ENCODE measurements at regions of chr7 and their contacts with region 1.

Region 1: DNA sequence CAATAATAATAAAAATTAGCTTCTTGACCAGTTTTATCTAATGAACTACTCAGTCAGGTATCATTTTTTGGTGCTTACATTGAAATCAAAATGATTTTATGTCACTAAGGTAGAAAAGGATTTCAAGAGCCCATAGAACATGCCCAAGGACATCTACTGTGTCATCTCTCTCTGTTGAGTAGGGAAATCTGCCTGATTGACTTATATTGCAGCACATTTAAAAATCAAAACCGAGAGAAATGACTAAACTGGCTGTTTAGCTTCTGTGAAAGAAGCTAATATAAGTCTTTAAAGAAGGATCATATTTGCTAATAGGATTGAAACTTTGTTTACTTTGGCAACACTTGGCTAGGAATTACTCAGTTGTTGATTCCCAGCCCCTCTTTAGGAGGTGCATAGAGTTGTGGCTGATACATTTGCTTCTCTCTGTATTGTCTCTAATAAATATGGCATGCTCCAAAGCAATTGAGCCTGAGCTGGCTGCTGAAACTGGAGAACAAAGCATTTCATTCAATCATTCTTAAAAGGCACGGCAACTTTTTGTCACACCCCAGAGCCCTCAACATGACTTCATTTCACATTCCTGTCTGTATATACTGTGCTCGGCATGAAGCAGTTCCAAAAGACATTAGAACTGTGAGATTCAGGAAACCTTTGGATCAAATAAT is 1096.9 kb upstream of the POT1 start:
- DNase-seq: no peak
- ATAC-seq: no peak
- H3K4me3 Mint-ChIP-seq: no peak overlapping the region
- H3K27ac Mint-ChIP-seq: no peak overlapping the region
- H3K4me1 Mint-ChIP-seq: no peaks in the 10 kb centered on the region
- H3K27me3 Mint-ChIP-seq: no peaks in the 10 kb centered on the region

Region 2: GRCh38 chr7:126065766-126066165 is 39.2 kb after region 1 on chr7:
- CTCF ChIA-PET with region 1: no interaction called
- POLR2A ChIA-PET with region 1: no interaction called
- intact Hi-C with region 1: loop called in 1 of 2 experiments (anchors 5 kb)
- DNase-seq: no peak
- ATAC-seq: no peak
- H3K4me3 Mint-ChIP-seq: no peak overlapping the region
- H3K27ac Mint-ChIP-seq: no peak overlapping the region
- H3K4me1 Mint-ChIP-seq: no peaks in the 10 kb centered on the region
- H3K27me3 Mint-ChIP-seq: no peaks in the 10 kb centered on the region

Region 3: DNA sequence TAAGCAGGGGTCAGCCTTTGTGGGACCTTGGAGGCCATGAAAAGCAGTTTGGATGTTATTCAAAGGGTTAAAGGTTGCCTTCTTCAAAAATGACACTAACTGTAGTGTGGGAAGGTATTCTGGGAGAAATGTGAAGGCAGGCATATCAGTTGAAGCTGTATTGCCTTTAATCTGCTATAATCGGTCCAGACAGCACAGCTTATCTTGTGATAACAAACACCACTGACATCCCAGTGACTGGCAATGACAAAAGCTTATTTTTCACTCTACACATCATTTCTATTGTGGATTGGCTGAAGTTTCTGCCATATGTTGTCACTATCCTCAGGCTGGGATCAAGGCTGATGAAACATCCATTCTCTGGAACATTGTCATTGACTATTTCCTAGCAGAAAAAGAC is 77.0 kb after region 1 on chr7:
- CTCF ChIA-PET with region 1: no interaction called
- POLR2A ChIA-PET with region 1: no interaction called
- intact Hi-C with region 1: loop called in 1 of 2 experiments (anchors 10 kb)
- DNase-seq: no peak
- ATAC-seq: no peak
- H3K4me3 Mint-ChIP-seq: no peak overlapping the region
- H3K27ac Mint-ChIP-seq: no peak overlapping the region
- H3K4me1 Mint-ChIP-seq: no peaks in the 10 kb centered on the region
- H3K27me3 Mint-ChIP-seq: no peaks in the 10 kb centered on the region

Region 4: DNA sequence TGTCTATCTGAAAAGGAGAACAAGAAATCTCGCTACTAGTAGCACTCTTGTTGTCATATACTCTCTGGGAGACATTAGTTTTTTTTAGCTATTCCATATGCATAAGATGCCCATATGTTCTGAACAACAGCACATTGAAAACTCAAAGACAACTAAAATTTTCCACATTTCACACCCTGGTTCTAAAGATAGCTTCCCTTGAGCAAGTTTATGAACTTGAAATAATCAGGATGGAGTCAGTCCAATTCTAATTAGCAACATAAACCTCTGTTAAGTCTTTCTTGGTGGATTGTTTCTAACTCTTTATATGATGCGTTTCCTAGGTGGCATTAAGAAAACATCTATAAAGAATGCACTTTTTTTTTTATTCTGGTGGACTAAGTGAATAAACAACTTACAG is 130.8 kb after region 1 on chr7:
- CTCF ChIA-PET with region 1: no interaction called
- POLR2A ChIA-PET with region 1: no interaction called
- intact Hi-C with region 1: no loop called
- DNase-seq: no peak
- ATAC-seq: no peak
- H3K4me3 Mint-ChIP-seq: no peak overlapping the region
- H3K27ac Mint-ChIP-seq: no peak overlapping the region
- H3K4me1 Mint-ChIP-seq: no peaks in the 10 kb centered on the region
- H3K27me3 Mint-ChIP-seq: no peaks in the 10 kb centered on the region